Astrocyte of the cerebellum (primary cell): ENCODE measurements at regions of chr15 and their contacts with region 1.

Region 1: GRCh38 chr15:29765898-29766527 is 56.3 kb downstream of the TJP1 start:
- DNase-seq: peak; percentile 59
- H3K4me3 ChIP-seq: no peak overlapping the region
- CTCF ChIP-seq: no peak

Region 2: GRCh38 chr15:29821416-29822131 is 55.6 kb after region 1 on chr15:
- in situ Hi-C with region 1: loop called (anchors 10 kb)
- DNase-seq: no peak
- H3K4me3 ChIP-seq: peak overlapping the region; percentile 81
- CTCF ChIP-seq: peak; percentile 10